Aorta (tissue), 5 donors: ENCODE measurements at regions of chr13 and their contacts with region 1.

Region 1: GRCh38 chr13:113928685-113929627 is 44.9 kb downstream of the C13orf46 start:
- DNase-seq: peak; percentile 91 to 92
- ATAC-seq: peak; percentile 87
- H3K4me3 ChIP-seq: no peak overlapping the region
- H3K27ac ChIP-seq: peak overlapping the region in 1 of 2 donors; percentile 73
- H3K4me1 ChIP-seq: no peaks in the 10 kb centered on the region
- H3K27me3 ChIP-seq: no peaks in the 10 kb centered on the region

Region 2: GRCh38 chr13:113758651-113759524 is 170.1 kb before region 1 on chr13 and contains the start of gene TMEM255B:
- intact Hi-C with region 1: loop called in 1 of 2 experiments (anchors 5 kb)
- DNase-seq: peak; percentile 90 to 97
- ATAC-seq: peak; percentile 96
- H3K4me3 ChIP-seq: peak within 1 kb of the TSS; percentile 71 to 75
- H3K27ac ChIP-seq: no peak within 1 kb of the TSS
- H3K4me1 ChIP-seq: no peaks in the 10 kb centered on the region
- H3K27me3 ChIP-seq: no peaks in the 10 kb centered on the region
- total RNA-seq, gene TMEM255B: 36.6 to 67.3 TPM

Region 3: DNA sequence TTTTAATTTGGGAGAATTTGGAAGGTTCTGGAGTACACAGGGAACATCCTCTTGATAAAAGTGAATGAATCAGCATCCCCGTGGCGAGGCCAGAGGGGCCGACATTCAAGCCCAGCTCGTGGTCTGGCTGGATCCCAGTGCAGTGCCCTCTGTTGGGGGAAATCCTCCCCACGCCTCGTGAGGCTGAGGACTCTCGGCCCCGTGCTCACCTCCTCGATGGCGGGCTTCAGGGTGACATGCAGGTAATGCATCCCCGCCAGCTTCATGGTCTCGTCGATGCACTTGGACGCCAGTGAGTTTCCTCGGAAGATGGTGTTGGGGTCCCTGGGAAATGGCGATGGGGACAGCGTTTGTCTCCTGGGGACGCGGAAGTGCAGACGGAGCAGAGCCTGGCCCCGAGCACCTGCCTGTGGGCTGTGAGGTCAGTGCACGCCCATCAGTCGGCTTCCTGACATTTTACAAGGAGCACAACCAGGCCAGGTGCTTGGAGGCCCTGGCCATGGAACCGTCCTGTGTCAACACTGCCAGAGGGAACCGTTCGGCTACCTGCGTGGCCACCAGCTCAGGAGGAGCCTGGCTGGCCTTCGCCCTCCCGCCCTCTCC is 88.2 kb after region 1 on chr13:
- intact Hi-C with region 1: no loop called
- DNase-seq: peak in 1 of 2 donors; percentile 76
- ATAC-seq: no peak
- H3K4me3 ChIP-seq: no peak overlapping the region
- H3K27ac ChIP-seq: no peak overlapping the region
- H3K4me1 ChIP-seq: no peaks in the 10 kb centered on the region
- H3K27me3 ChIP-seq: no peaks in the 10 kb centered on the region

Region 4: GRCh38 chr13:114142640-114143490 is 213.9 kb after region 1 on chr13:
- intact Hi-C with region 1: no loop called
- DNase-seq: peak; percentile 61 to 70
- ATAC-seq: peak; percentile 68
- H3K4me3 ChIP-seq: no peak overlapping the region
- H3K27ac ChIP-seq: no peak overlapping the region
- H3K4me1 ChIP-seq: no peaks in the 10 kb centered on the region
- H3K27me3 ChIP-seq: no peaks in the 10 kb centered on the region